GM10248 (cell line): ENCODE measurements at regions of chr16 and their contacts with region 1.

Region 1: GRCh38 chr16:72066747-72067146 is 3.7 kb downstream of the HPR start:
- DNase-seq: peak; percentile 29
- CTCF ChIP-seq: peak; percentile 64

Region 2: GRCh38 chr16:72001180-72001874 is 65.4 kb before region 1 on chr16:
- CTCF ChIA-PET with region 1: no interaction called
- POLR2A ChIA-PET with region 1: no interaction called
- DNase-seq: no peak
- CTCF ChIP-seq: no peak

Region 3: DNA sequence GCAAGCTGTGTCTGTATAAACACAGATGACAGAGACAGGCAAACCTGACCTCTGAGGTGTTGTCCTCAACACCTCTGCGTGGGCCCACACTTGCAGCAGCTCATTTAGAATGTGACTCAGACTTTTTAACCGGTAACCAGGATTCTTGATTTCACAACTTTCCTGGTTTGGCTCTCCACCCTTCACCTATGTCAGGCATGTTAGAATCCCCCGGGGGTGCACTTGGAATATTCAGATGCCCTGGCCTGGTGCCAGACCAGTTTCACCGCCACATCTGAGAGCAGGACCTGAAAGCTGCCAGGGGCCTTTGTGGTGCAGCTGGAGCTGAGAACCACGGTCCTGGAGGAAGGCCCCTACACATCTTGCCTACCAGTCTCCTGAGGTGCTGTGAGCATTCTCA is 53.4 kb before region 1 on chr16:
- CTCF ChIA-PET with region 1: interaction called, 10 read pairs
- POLR2A ChIA-PET with region 1: no interaction called
- DNase-seq: no peak
- CTCF ChIP-seq: no peak

Region 4: GRCh38 chr16:72099377-72099818 is 32.7 kb after region 1 on chr16:
- CTCF ChIA-PET with region 1: interaction called, 15 read pairs
- POLR2A ChIA-PET with region 1: no interaction called
- DNase-seq: peak; percentile 66
- CTCF ChIP-seq: peak; percentile 53